ENCODE measurements at regions of chr2 and their contacts with region 1.

Region 1: GRCh38 chr2:42095923-42096408 is 48.1 kb downstream of the PKDCC start:
- DNase-seq: peak; percentile 88
- H3K4me3 ChIP-seq: no peak overlapping the region
- H3K27ac ChIP-seq: peak overlapping the region in 3 of 8 donors; percentile 93 to 97 (median 97)
- H3K4me1 ChIP-seq: peaks cover 44 to 71% (median 53%) of the 10 kb centered on the region in 6 donors
- H3K27me3 ChIP-seq: no peaks in the 10 kb centered on the region
- CTCF ChIP-seq: peak; percentile 64 to 94 (median 84)
- POLR2A ChIP-seq: no peak

Region 2: DNA sequence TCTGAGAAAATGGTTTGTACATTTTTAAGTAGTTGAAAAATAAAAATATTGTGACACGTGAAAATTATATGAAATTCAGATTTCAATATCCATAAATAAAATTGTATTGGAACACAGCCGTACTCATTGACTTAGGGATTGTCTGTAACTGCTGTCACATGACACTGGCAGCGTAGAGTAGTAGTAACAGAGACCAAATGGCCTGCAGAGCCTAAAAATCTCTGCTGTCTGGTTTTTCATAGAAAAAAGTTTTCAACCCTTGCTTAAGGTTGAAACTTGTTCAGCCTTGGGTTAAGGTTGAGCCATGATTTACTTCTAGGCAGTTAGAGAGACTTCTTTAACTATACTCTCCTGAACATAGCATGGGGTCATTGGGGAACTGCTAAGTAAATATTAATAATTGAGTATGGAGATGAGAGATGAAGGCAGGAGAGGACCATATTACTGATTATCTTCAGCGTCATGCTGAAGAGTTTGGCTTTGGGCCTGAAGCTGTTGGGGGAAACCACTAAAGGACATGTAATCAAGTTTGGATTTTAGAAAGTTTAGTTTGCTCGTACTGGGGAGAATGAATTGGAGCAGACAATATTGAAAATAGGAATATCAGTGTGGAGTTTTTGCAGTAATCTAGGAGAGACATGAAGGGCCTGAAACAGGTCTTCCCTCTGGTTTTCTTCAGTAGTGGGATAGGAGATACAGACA is 89.4 kb after region 1 on chr2:
- intact Hi-C with region 1: no loop called
- DNase-seq: no peak
- H3K4me3 ChIP-seq: no peak overlapping the region
- H3K27ac ChIP-seq: peak overlapping the region in 2 of 8 donors; percentile 16 to 22
- H3K4me1 ChIP-seq: peaks cover 22 to 100% (median 76%) of the 10 kb centered on the region in 6 donors
- H3K27me3 ChIP-seq: no peaks in the 10 kb centered on the region
- CTCF ChIP-seq: no peak
- POLR2A ChIP-seq: no peak

Region 3: DNA sequence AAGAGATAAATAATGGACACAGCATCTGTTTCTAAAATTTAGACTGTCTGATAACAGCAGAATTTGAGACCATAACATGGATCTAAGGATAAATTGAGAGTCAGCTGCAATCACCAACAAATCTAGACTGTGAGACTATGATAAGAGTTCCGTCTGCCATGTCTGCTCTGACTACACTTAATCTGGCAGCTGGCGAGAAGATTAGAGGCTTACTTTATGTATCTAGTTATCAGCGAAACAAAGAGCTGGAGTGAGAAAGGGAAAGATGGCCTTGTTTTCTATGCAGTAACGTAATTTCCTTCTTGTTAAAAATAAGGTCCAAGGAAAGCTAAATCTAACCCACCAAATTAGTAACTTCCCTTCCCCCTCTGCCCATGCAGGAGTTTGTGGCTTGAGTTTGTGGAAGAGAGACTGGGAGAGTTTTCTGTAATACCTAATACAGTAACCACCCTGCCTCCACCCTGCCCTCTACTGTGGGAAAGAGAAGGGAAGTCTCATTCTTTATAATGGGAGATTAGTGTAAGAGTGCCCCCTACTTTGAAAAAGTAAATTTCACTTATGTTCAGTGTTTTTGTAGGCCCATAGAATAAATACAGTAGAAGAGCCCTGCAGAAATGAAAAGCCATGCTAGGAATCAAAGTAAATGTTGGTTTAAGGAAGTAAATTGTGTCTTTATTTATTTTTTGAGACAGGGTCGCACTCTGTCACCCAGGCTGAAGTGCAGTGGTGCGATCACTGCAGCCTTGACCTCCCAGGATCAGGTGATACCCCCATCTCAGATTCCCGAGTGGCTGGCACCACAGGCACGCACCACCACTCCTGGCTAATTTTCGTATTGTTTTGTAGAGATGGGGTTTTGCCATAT is 100.7 kb after region 1 on chr2:
- intact Hi-C with region 1: loop called (anchors 2 kb)
- DNase-seq: no peak
- H3K4me3 ChIP-seq: peak overlapping the region in 1 of 8 donors; percentile 27
- H3K27ac ChIP-seq: peak overlapping the region in 7 of 8 donors; percentile 17 to 79 (median 69)
- H3K4me1 ChIP-seq: peaks cover 49 to 99% (median 95%) of the 10 kb centered on the region in 6 donors
- H3K27me3 ChIP-seq: no peaks in the 10 kb centered on the region
- CTCF ChIP-seq: peak; percentile 17 to 90 (median 71)
- POLR2A ChIP-seq: no peak

Region 4: GRCh38 chr2:42238644-42239288 is 142.8 kb after region 1 on chr2:
- intact Hi-C with region 1: loop called (anchors 10 kb)
- DNase-seq: no peak
- H3K4me3 ChIP-seq: no peak overlapping the region
- H3K27ac ChIP-seq: no peak overlapping the region
- H3K4me1 ChIP-seq: peaks cover 13 to 97% (median 68%) of the 10 kb centered on the region in 6 donors
- H3K27me3 ChIP-seq: no peaks in the 10 kb centered on the region
- CTCF ChIP-seq: peak in 8 of 11 experiments; percentile 9 to 55 (median 35)
- POLR2A ChIP-seq: no peak

Region 5: DNA sequence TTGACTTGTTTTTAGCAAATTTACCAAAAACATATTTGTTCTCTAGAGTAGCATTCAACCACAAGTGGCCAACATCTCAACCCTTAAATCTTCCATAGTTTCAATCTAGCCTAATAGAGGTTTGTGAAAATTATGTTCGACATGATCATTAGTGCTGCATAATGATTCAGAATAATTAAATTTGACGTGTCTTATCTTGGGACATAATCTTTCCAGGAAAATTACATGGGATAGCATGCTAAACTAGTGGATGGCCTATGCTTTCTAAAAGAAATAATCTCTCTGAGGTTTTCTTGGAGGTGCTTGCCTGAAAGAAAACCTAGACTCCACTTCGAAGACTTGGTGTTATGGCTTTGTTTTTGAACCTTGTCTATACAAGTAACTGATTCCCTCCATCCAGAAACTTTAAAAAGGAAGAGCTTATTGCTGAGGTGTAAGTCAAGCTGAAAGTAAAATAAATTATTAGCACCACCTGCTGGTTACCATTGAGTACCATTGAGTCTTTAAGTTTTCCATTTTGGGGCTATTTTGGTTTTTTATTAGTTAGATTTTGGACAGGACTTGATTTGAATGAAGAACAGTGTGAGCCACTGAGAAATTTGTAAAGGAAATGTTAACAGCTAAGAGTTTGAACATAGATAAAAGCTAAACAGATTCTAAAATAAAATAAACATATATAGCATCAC is 232.3 kb after region 1 on chr2:
- intact Hi-C with region 1: loop called (anchors 10 kb)
- DNase-seq: no peak
- H3K4me3 ChIP-seq: no peak overlapping the region
- H3K27ac ChIP-seq: peak overlapping the region in 1 of 8 donors; percentile 12
- H3K4me1 ChIP-seq: peaks cover 0 to 6% (median 0%) of the 10 kb centered on the region in 6 donors
- H3K27me3 ChIP-seq: no peaks in the 10 kb centered on the region
- CTCF ChIP-seq: peak in 8 of 11 experiments; percentile 16 to 46 (median 38)
- POLR2A ChIP-seq: no peak

Measured in spleen (tissue), 13 donors.